ENCODE measurements at regions of chr19 and their contacts with region 1.

Region 1: DNA sequence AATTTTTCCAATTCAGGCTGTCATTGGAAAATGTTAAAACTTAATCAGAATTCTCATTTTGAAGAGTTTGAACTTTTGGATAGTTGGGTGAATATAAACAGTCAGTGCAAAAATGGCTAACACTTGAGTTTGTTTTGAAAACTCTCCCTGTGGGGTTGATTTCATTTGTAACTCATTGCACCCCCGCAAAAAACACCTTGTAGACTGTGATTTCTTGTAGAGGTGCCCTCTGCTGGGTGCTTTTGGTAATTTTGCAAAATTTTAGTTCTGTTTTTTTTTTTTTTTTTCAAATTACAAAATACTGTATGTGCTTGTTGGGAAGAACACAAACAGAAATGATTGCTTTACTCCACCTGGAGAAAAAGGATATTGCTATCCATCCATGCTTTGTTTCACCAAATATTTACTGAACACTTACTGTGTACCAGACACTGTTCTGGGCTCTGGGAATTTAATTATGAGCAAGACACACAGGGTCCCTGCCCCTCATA is 28.2 kb upstream of the GPI start:
- DNase-seq: peak; percentile 71
- ATAC-seq: no peak
- H3K4me3 ChIP-seq: no peak overlapping the region
- H3K4me3 Mint-ChIP-seq: no peak overlapping the region
- H3K27ac ChIP-seq: no peak overlapping the region
- H3K27ac Mint-ChIP-seq: no peak overlapping the region
- H3K4me1 ChIP-seq: peaks cover 0 to 2% of the 10 kb centered on the region in 2 donors
- H3K4me1 Mint-ChIP-seq: peaks cover 6% of the 10 kb centered on the region
- H3K27me3 ChIP-seq: no peaks in the 10 kb centered on the region
- H3K27me3 Mint-ChIP-seq: no peaks in the 10 kb centered on the region
- CTCF ChIP-seq: peak; percentile 83

Region 2: GRCh38 chr19:33040994-33041827 is 1295.6 kb before region 1 on chr19:
- CTCF ChIA-PET with region 1: no interaction called
- POLR2A ChIA-PET with region 1: no interaction called
- intact Hi-C with region 1: no loop called
- DNase-seq: no peak
- ATAC-seq: no peak
- H3K4me3 ChIP-seq: no peak overlapping the region
- H3K4me3 Mint-ChIP-seq: no peak overlapping the region
- H3K27ac ChIP-seq: no peak overlapping the region
- H3K27ac Mint-ChIP-seq: no peak overlapping the region
- H3K4me1 ChIP-seq: no peaks in the 10 kb centered on the region
- H3K4me1 Mint-ChIP-seq: peaks cover 8% of the 10 kb centered on the region
- H3K27me3 ChIP-seq: no peaks in the 10 kb centered on the region
- H3K27me3 Mint-ChIP-seq: no peaks in the 10 kb centered on the region
- CTCF ChIP-seq: no peak

Region 3: GRCh38 chr19:34220472-34221063 is 116.3 kb before region 1 on chr19:
- CTCF ChIA-PET with region 1: interaction called, 5 read pairs
- POLR2A ChIA-PET with region 1: no interaction called
- intact Hi-C with region 1: loop called (anchors 2 kb)
- DNase-seq: peak; percentile 75
- ATAC-seq: peak; percentile 42
- H3K4me3 ChIP-seq: no peak overlapping the region
- H3K4me3 Mint-ChIP-seq: no peak overlapping the region
- H3K27ac ChIP-seq: no peak overlapping the region
- H3K27ac Mint-ChIP-seq: peak overlapping the region; percentile 72
- H3K4me1 ChIP-seq: peaks cover 22 to 24% of the 10 kb centered on the region in 2 donors
- H3K4me1 Mint-ChIP-seq: peaks cover 32% of the 10 kb centered on the region
- H3K27me3 ChIP-seq: no peaks in the 10 kb centered on the region
- H3K27me3 Mint-ChIP-seq: no peaks in the 10 kb centered on the region
- CTCF ChIP-seq: peak; percentile 86

Region 4: GRCh38 chr19:34253699-34254551 is 82.9 kb before region 1 on chr19:
- CTCF ChIA-PET with region 1: interaction called, 3 read pairs
- POLR2A ChIA-PET with region 1: interaction called, 8 read pairs
- intact Hi-C with region 1: loop called (anchors 5 kb)
- DNase-seq: peak; percentile 87
- ATAC-seq: peak; percentile 20
- H3K4me3 ChIP-seq: peak overlapping the region; percentile 83 to 93 (median 86)
- H3K4me3 Mint-ChIP-seq: peak overlapping the region; percentile 95
- H3K27ac ChIP-seq: peak overlapping the region; percentile 91 to 92
- H3K27ac Mint-ChIP-seq: peak overlapping the region; percentile 97
- H3K4me1 ChIP-seq: peaks cover 13 to 23% of the 10 kb centered on the region in 2 donors
- H3K4me1 Mint-ChIP-seq: peaks cover 28% of the 10 kb centered on the region
- H3K27me3 ChIP-seq: no peaks in the 10 kb centered on the region
- H3K27me3 Mint-ChIP-seq: no peaks in the 10 kb centered on the region
- CTCF ChIP-seq: no peak

Region 5: DNA sequence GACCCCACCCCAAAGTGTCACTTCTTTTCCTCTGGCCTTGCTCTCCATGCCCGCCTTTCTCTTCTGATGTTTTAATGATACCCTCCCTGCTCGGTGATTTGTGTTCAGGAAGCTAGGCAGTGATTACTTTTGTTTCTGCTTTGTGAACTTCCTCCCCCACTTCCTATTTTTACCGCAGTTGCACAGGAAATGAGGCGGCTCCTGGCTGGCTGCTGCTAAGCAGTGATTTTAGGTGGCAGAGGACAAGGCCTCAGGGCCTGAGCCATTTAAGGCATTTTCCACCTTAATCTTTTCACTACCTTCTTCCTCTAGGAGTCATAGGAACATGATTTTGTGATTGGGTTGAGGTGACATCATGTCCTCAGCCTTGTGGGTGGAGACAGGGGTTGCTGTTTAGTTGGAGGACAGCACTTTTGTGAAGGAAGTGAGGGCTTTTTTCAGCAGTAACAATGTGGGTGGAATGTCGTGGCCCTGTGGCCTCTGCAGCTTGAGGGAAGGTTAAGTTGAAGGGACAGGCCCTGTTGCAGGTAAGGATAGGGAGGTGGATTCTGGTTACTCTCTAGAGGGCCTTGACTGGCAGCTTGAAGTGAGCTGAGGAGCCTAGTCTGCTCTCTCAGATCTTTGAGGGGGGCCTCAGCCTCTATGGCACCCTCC is 66.7 kb before region 1 on chr19:
- CTCF ChIA-PET with region 1: interaction called, 16 read pairs
- POLR2A ChIA-PET with region 1: no interaction called
- intact Hi-C with region 1: loop called (anchors 1 kb)
- DNase-seq: peak; percentile 90
- ATAC-seq: peak; percentile 87
- H3K4me3 ChIP-seq: peak overlapping the region; percentile 21 to 51 (median 38)
- H3K4me3 Mint-ChIP-seq: peak overlapping the region; percentile 60
- H3K27ac ChIP-seq: peak overlapping the region; percentile 86 to 96
- H3K27ac Mint-ChIP-seq: peak overlapping the region; percentile 84
- H3K4me1 ChIP-seq: peaks cover 79 to 83% of the 10 kb centered on the region in 2 donors
- H3K4me1 Mint-ChIP-seq: peaks cover 76% of the 10 kb centered on the region
- H3K27me3 ChIP-seq: no peaks in the 10 kb centered on the region
- H3K27me3 Mint-ChIP-seq: no peaks in the 10 kb centered on the region
- CTCF ChIP-seq: no peak

Region 6: DNA sequence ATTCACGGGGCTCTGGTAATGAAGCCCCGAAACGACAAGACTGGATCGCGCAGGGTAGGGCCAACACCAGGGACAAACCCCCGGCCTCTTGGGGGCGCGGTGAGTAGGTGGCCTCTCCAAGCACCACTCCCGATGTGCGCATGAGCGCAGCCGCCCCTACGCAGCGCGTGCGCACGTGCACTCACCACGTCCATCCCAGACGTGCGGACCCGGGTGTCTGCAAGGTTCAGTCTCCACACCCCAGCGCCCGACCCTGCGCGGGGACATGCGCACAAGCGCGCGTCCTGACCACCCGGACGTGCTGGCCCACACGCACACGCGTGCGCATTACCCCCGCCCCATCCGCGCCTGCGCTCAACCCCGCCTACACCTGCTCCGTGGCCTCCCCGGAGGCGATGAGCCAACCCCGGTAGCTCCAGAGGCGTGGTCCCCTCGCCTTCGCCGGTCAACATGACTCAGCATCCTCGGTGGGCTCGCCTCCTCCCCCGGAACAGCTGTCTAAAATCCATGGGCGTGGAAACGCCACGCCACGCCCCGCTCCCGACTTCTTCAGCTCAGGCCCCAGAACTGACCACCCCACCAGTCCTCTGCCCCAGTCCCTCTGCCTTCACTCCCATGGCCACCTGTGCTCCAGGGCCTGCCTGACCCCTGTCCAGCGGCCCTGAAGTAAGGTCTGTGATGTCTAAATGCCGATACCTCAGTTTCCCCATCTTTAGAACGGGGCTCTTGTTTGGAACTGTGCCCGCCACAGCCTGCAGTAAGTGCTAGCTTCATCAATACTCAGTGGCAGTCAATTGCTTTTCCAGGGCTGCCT is 22.5 kb after region 1 on chr19:
- CTCF ChIA-PET with region 1: interaction called, 4 read pairs
- POLR2A ChIA-PET with region 1: no interaction called
- intact Hi-C with region 1: loop called (anchors 1 kb)
- DNase-seq: peak; percentile 96
- ATAC-seq: peak; percentile 92
- H3K4me3 ChIP-seq: peak overlapping the region; percentile 54 to 67 (median 56)
- H3K4me3 Mint-ChIP-seq: peak overlapping the region; percentile 96
- H3K27ac ChIP-seq: peak overlapping the region; percentile 59 to 68
- H3K27ac Mint-ChIP-seq: peak overlapping the region; percentile 97
- H3K4me1 ChIP-seq: peaks cover 12 to 20% of the 10 kb centered on the region in 2 donors
- H3K4me1 Mint-ChIP-seq: peaks cover 26% of the 10 kb centered on the region
- H3K27me3 ChIP-seq: no peaks in the 10 kb centered on the region
- H3K27me3 Mint-ChIP-seq: no peaks in the 10 kb centered on the region
- CTCF ChIP-seq: peak; percentile 66

Region 7: DNA sequence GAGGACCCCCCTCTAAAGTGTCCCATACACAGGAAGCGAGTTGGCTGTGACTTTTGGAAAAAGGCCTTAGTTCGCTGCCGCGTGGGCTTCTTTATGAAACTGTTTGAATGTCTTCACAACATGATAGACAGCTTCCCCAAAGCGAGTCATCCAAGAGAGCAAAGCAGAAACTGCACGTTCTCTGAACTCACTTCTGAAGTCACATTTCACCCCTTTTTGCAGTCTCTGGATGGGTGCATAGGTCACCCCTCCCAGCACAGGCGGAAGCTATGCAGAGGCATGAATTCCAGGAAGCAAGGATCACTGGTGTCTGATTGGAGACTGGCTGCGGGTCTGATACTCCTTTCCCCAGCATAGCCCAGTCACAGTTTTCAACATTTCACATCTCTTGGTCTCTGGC is 38.8 kb after region 1 on chr19:
- CTCF ChIA-PET with region 1: no interaction called
- POLR2A ChIA-PET with region 1: no interaction called
- intact Hi-C with region 1: no loop called
- DNase-seq: no peak
- ATAC-seq: no peak
- H3K4me3 ChIP-seq: no peak overlapping the region
- H3K4me3 Mint-ChIP-seq: no peak overlapping the region
- H3K27ac ChIP-seq: no peak overlapping the region
- H3K27ac Mint-ChIP-seq: no peak overlapping the region
- H3K4me1 ChIP-seq: no peaks in the 10 kb centered on the region
- H3K4me1 Mint-ChIP-seq: no peaks in the 10 kb centered on the region
- H3K27me3 ChIP-seq: no peaks in the 10 kb centered on the region
- H3K27me3 Mint-ChIP-seq: no peaks in the 10 kb centered on the region
- CTCF ChIP-seq: no peak